Caco-2 (cell line): ENCODE measurements at regions of chr5 and their contacts with region 1.

Region 1: DNA sequence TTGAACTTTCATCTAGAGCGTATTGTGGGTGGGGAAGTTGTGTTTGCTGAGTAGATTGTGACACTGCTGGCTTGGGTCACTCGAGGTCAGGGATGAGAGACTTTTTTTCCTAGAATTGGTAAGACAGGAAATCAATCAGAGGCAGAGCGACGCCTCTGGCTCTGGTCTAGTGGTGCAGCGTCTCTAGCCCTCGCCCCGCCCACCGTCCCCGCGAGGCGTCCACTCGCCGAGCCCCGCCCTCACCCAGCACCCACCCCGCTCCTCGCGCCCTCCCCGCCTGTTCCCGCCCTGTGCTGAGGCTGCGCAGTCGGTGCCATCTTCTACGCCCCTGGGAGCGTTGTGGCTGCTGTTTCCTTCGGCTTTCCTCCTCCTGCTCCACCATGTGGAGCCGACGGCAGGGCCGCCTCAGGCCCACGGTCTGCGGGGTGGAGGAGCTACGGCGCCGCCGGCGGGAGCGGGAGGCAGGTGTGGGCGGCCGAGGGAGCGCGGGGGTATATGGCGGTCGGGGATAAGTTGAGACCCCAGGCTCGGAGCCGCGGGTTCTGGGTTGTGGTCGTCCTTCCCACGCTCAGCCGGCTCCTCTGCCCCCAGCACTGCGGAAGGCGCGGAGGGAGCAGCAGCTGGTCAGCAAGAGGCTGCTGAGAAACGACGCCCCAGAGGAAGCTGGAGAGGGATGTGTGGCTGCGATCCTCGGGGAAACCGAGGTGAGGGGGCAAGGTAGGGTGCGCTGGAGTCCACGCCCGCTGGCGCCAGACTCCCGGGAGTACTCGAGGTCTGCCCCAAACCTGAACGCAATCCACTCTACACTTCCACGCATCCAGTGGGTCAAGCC is at the start of gene TMCO6:
- DNase-seq: peak; percentile 97 to 98
- H3K4me3 ChIP-seq: peak within 1 kb of the TSS; percentile 96
- H3K4me3 Mint-ChIP-seq: peak within 1 kb of the TSS; percentile 83
- H3K27ac Mint-ChIP-seq: peak within 1 kb of the TSS; percentile 96
- H3K4me1 ChIP-seq: peaks cover 17% of the 10 kb centered on the region
- H3K4me1 Mint-ChIP-seq: peaks cover 27% of the 10 kb centered on the region
- H3K27me3 ChIP-seq: no peaks in the 10 kb centered on the region
- H3K27me3 Mint-ChIP-seq: no peaks in the 10 kb centered on the region
- CTCF ChIP-seq: peak; percentile 74 to 77
- total RNA-seq, gene TMCO6: 37.8 and 46.4 TPM in 2 replicates

Region 2: GRCh38 chr5:140401362-140402257 is 237.8 kb before region 1 on chr5 and contains the start of gene ANKHD1:
- CTCF ChIA-PET with region 1: no interaction called
- POLR2A ChIA-PET with region 1: interaction called, 4 read pairs
- intact Hi-C with region 1: loop called (anchors 1 kb)
- DNase-seq: peak; percentile 99 to 100
- H3K4me3 ChIP-seq: peak within 1 kb of the TSS; percentile 72
- H3K4me3 Mint-ChIP-seq: no peak within 1 kb of the TSS
- H3K27ac Mint-ChIP-seq: no peak within 1 kb of the TSS
- H3K4me1 ChIP-seq: no peaks in the 10 kb centered on the region
- H3K4me1 Mint-ChIP-seq: peaks cover 7% of the 10 kb centered on the region
- H3K27me3 ChIP-seq: no peaks in the 10 kb centered on the region
- H3K27me3 Mint-ChIP-seq: no peaks in the 10 kb centered on the region
- CTCF ChIP-seq: no peak
- total RNA-seq, gene ANKHD1: 130 and 134 TPM in 2 replicates

Region 3: DNA sequence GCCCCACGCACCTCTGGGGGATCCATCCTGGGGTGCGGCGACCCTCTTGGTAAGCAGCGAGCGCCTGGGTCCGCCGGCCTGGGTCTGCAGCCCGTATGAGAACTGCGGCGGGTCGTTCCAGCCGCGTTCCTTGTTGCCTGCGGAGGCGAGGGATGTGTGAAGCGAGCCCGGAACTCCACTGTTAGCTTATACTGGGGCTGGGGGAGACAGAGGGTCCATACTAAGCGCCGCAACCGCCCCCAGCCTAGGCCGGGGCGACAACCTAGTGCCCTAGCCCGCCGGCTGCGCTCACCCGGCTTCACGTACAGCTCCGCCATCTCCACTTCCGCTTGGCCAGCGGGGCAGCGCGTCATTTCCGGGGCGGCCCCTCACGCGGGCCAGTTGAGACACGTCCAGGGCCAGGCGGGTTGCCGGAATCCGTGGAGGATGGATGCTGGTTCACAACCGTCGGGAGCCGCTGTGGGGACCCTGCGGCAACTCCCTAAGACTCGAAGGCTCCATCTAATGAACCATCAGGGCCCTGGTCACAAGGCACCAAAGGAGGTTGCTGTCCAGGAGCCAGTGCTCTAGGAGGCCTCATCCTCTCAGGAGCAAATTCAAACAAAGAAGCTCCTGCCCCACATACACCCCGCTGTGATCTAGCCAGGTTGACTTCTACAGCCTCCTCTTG is 82.1 kb before region 1 on chr5 and contains the start of gene SRA1:
- CTCF ChIA-PET with region 1: no interaction called
- POLR2A ChIA-PET with region 1: interaction called, 7 read pairs
- intact Hi-C with region 1: loop called (anchors 1 kb)
- DNase-seq: peak; percentile 93 to 94
- H3K4me3 ChIP-seq: peak within 1 kb of the TSS; percentile 79
- H3K4me3 Mint-ChIP-seq: peak within 1 kb of the TSS; percentile 87
- H3K27ac Mint-ChIP-seq: peak within 1 kb of the TSS; percentile 91
- H3K4me1 ChIP-seq: peaks cover 14% of the 10 kb centered on the region; the same call in 1 of the 2 replicates
- H3K4me1 Mint-ChIP-seq: peaks cover 35% of the 10 kb centered on the region
- H3K27me3 ChIP-seq: no peaks in the 10 kb centered on the region
- H3K27me3 Mint-ChIP-seq: no peaks in the 10 kb centered on the region
- CTCF ChIP-seq: peak in 1 of 2 experiments; percentile 1
- total RNA-seq, gene SRA1: 44.0 and 50.3 TPM in 2 replicates

Region 4: GRCh38 chr5:140575309-140575708 is 64.1 kb before region 1 on chr5:
- CTCF ChIA-PET with region 1: no interaction called
- POLR2A ChIA-PET with region 1: no interaction called
- intact Hi-C with region 1: loop called (anchors 5 kb)
- DNase-seq: peak; percentile 60 to 61
- H3K4me3 ChIP-seq: no peak overlapping the region
- H3K4me3 Mint-ChIP-seq: no peak overlapping the region
- H3K27ac Mint-ChIP-seq: no peak overlapping the region
- H3K4me1 ChIP-seq: peaks cover 7% of the 10 kb centered on the region
- H3K4me1 Mint-ChIP-seq: peaks cover 19% of the 10 kb centered on the region
- H3K27me3 ChIP-seq: no peaks in the 10 kb centered on the region
- H3K27me3 Mint-ChIP-seq: no peaks in the 10 kb centered on the region
- CTCF ChIP-seq: peak; percentile 31 to 39

Region 5: GRCh38 chr5:140664359-140665119 is 25.2 kb after region 1 on chr5 and contains the start of gene WDR55:
- CTCF ChIA-PET with region 1: no interaction called
- POLR2A ChIA-PET with region 1: no interaction called
- intact Hi-C with region 1: loop called (anchors 1 kb)
- DNase-seq: peak; percentile 97
- H3K4me3 ChIP-seq: peak within 1 kb of the TSS; percentile 86
- H3K4me3 Mint-ChIP-seq: peak within 1 kb of the TSS; percentile 98
- H3K27ac Mint-ChIP-seq: peak within 1 kb of the TSS; percentile 89
- H3K4me1 ChIP-seq: peaks cover 7% of the 10 kb centered on the region; the same call in 1 of the 2 replicates
- H3K4me1 Mint-ChIP-seq: peaks cover 14% of the 10 kb centered on the region
- H3K27me3 ChIP-seq: no peaks in the 10 kb centered on the region
- H3K27me3 Mint-ChIP-seq: no peaks in the 10 kb centered on the region
- CTCF ChIP-seq: no peak
- total RNA-seq, gene WDR55: 38.8 and 40.2 TPM in 2 replicates

Region 6: DNA sequence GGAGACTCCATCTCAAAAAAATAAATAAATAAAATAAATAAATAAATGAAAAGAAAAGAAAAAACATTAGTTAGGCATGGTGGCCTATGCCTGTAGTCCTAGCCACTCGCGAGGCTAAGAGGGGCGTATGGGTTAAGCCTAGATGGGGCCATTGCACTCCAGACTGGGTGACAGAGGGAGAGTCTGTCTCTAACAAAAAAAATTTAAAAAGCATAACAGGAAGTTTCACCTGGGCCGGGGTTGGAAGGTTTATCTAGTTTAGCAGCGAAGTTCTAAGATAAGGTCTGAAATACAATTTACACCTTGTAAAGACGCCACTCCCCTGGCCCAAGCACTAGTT is 78.8 kb after region 1 on chr5:
- CTCF ChIA-PET with region 1: interaction called, 3 read pairs
- POLR2A ChIA-PET with region 1: interaction called, 4 read pairs
- intact Hi-C with region 1: loop called (anchors 1 kb)
- DNase-seq: no peak
- H3K4me3 ChIP-seq: peak overlapping the region; percentile 41
- H3K4me3 Mint-ChIP-seq: peak overlapping the region; percentile 99
- H3K27ac Mint-ChIP-seq: peak overlapping the region; percentile 100
- H3K4me1 ChIP-seq: no peaks in the 10 kb centered on the region
- H3K4me1 Mint-ChIP-seq: peaks cover 15% of the 10 kb centered on the region
- H3K27me3 ChIP-seq: no peaks in the 10 kb centered on the region
- H3K27me3 Mint-ChIP-seq: peaks cover 8% of the 10 kb centered on the region
- CTCF ChIP-seq: no peak